PC-3 (cell line): ENCODE measurements at regions of chr14 and their contacts with region 1.

Region 1: GRCh38 chr14:44369401-44370123 is 137.5 kb downstream of the FSCB start:
- DNase-seq: peak; percentile 60
- ATAC-seq: no peak
- H3K4me3 ChIP-seq: no peak overlapping the region
- H3K27ac ChIP-seq: peak overlapping the region; percentile 46
- H3K4me1 ChIP-seq: peaks cover 59% of the 10 kb centered on the region
- H3K27me3 ChIP-seq: no peaks in the 10 kb centered on the region
- CTCF ChIP-seq: peak; percentile 41

Region 2: GRCh38 chr14:43285575-43285974 is 1084.0 kb before region 1 on chr14:
- CTCF ChIA-PET with region 1: no interaction called
- POLR2A ChIA-PET with region 1: no interaction called
- intact Hi-C with region 1: no loop called
- DNase-seq: no peak
- ATAC-seq: no peak
- H3K4me3 ChIP-seq: no peak overlapping the region
- H3K27ac ChIP-seq: no peak overlapping the region
- H3K4me1 ChIP-seq: no peaks in the 10 kb centered on the region
- H3K27me3 ChIP-seq: no peaks in the 10 kb centered on the region
- CTCF ChIP-seq: no peak

Region 3: DNA sequence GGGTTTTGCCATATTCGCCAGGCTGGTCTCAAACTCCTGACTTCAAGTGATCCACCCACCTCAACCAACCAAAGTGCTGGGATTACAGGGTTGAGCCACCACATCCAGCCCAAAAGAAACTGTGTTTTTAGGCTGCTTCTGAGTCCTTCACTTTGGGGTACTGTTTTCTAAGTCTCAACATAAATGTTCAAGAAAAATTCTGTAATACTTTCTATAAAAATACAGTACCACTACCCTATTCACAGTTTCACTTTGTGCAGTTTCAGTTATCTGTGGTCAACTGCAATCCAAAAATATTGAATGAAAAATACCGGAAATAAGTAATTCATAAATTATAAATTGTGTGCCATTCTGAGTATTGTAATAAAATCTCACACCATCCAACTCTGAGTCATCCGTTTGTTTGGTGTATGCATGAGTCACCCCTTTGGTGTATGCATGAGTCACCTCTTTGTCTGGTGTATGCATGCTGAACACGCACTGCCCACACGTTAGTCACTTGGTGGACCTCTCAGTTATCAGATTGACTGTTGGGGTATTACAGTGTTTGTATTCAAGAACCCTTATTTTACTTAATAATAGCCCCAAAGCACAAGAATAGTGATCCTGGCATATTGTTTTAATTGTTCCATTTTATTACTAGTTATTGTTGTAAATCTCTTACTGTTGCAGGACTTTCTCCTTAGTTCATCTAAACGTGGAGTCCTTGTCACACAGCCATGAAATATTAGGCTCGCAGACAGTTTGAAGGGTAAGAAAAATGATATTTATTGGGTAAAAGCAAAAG is 52.7 kb before region 1 on chr14:
- CTCF ChIA-PET with region 1: no interaction called
- POLR2A ChIA-PET with region 1: no interaction called
- intact Hi-C with region 1: loop called (anchors 2 kb)
- DNase-seq: peak; percentile 98
- ATAC-seq: peak; percentile 100
- H3K4me3 ChIP-seq: no peak overlapping the region; the same call in 1 of the 2 replicates
- H3K27ac ChIP-seq: peak overlapping the region; percentile 91
- H3K4me1 ChIP-seq: peaks cover 5% of the 10 kb centered on the region
- H3K27me3 ChIP-seq: no peaks in the 10 kb centered on the region
- CTCF ChIP-seq: no peak

Region 4: GRCh38 chr14:44438936-44439335 is 69.4 kb after region 1 on chr14:
- CTCF ChIA-PET with region 1: no interaction called
- POLR2A ChIA-PET with region 1: no interaction called
- intact Hi-C with region 1: loop called (anchors 2 kb)
- DNase-seq: peak; percentile 66
- ATAC-seq: peak; percentile 95
- H3K4me3 ChIP-seq: no peak overlapping the region
- H3K27ac ChIP-seq: 0 out of 2 replicates have a peak overlapping the region, but pooled peaks have one; percentile 38
- H3K4me1 ChIP-seq: peaks cover 8% of the 10 kb centered on the region
- H3K27me3 ChIP-seq: no peaks in the 10 kb centered on the region
- CTCF ChIP-seq: no peak

Region 5: GRCh38 chr14:44609876-44610510 is 240.4 kb after region 1 on chr14:
- CTCF ChIA-PET with region 1: no interaction called
- POLR2A ChIA-PET with region 1: no interaction called
- intact Hi-C with region 1: loop called (anchors 10 kb)
- DNase-seq: no peak
- ATAC-seq: no peak
- H3K4me3 ChIP-seq: no peak overlapping the region
- H3K27ac ChIP-seq: no peak overlapping the region
- H3K4me1 ChIP-seq: peaks cover 9% of the 10 kb centered on the region; the same call in 1 of the 2 replicates
- H3K27me3 ChIP-seq: no peaks in the 10 kb centered on the region
- CTCF ChIP-seq: no peak

Region 6: GRCh38 chr14:44803239-44803905 is 433.8 kb after region 1 on chr14:
- CTCF ChIA-PET with region 1: no interaction called
- POLR2A ChIA-PET with region 1: no interaction called
- intact Hi-C with region 1: loop called (anchors 10 kb)
- DNase-seq: peak; percentile 77
- ATAC-seq: peak; percentile 95
- H3K4me3 ChIP-seq: no peak overlapping the region
- H3K27ac ChIP-seq: no peak overlapping the region
- H3K4me1 ChIP-seq: no peaks in the 10 kb centered on the region
- H3K27me3 ChIP-seq: no peaks in the 10 kb centered on the region
- CTCF ChIP-seq: peak; percentile 90